Activated T-helper 1 cell treated with anti-CD3 and anti-CD28 coated beads, Interleukin-12 subunit alpha, Interleukin-12 subunit beta, Interleukin-2, Interleukin-4 antibody, amounts not matched to agents 30 ng/mL and 10 ng/mL and 1 ng/mL, durations not matched to agents 14 hours and 24 hours and 36 hours (primary cell): ENCODE measurements at regions of chr16 and their contacts with region 1.

Region 1: DNA sequence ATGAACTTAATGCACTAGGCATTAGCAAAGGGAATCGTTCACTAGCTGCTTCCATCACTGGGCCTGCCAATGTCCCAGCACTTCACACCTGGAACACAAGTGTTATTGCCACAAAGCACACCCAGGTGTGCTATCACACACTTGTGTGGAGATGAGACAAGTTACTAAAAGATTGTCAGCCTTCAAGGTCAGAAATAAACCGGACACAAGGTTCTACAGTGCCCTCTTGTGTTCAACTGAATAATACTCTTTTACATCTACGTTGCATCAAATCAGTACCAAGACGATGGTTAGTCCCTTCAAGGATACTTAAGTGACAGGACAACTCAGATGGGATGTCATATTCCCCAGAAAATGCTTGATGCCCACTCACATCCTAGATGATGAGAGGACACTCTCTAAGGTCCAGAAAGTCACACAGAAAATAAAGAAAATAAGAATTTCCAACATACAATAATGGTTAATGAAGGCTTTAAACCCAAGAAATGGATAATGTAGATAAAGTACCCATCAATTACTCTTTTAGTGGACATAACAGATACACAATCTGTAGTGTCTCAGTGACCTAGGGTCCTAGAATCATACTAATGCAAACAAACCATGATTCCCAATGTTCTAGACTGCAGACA is 16.4 kb upstream of the GLG1 start:
- DNase-seq: no peak
- H3K4me3 Mint-ChIP-seq: no peak overlapping the region
- H3K27ac Mint-ChIP-seq: no peak overlapping the region
- H3K4me1 Mint-ChIP-seq: peaks cover 39% of the 10 kb centered on the region
- H3K27me3 Mint-ChIP-seq: no peaks in the 10 kb centered on the region

Region 2: GRCh38 chr16:74372953-74373846 is 250.1 kb before region 1 on chr16:
- intact Hi-C with region 1: loop called (anchors 5 kb)
- DNase-seq: no peak
- H3K4me3 Mint-ChIP-seq: no peak overlapping the region
- H3K27ac Mint-ChIP-seq: no peak overlapping the region
- H3K4me1 Mint-ChIP-seq: peaks cover 6% of the 10 kb centered on the region
- H3K27me3 Mint-ChIP-seq: no peaks in the 10 kb centered on the region

Region 3: GRCh38 chr16:74466872-74467271 is 156.5 kb before region 1 on chr16:
- intact Hi-C with region 1: loop called (anchors 2 kb)
- DNase-seq: no peak
- H3K4me3 Mint-ChIP-seq: peak overlapping the region; percentile 21
- H3K27ac Mint-ChIP-seq: peak overlapping the region; percentile 29
- H3K4me1 Mint-ChIP-seq: peaks cover 25% of the 10 kb centered on the region
- H3K27me3 Mint-ChIP-seq: no peaks in the 10 kb centered on the region

Region 4: GRCh38 chr16:74492976-74493375 is 130.4 kb before region 1 on chr16:
- intact Hi-C with region 1: loop called (anchors 2 kb)
- DNase-seq: no peak
- H3K4me3 Mint-ChIP-seq: no peak overlapping the region
- H3K27ac Mint-ChIP-seq: no peak overlapping the region
- H3K4me1 Mint-ChIP-seq: peaks cover 5% of the 10 kb centered on the region
- H3K27me3 Mint-ChIP-seq: no peaks in the 10 kb centered on the region

Region 5: GRCh38 chr16:74577882-74578366 is 45.4 kb before region 1 on chr16:
- intact Hi-C with region 1: loop called (anchors 1 kb)
- DNase-seq: no peak
- H3K4me3 Mint-ChIP-seq: no peak overlapping the region
- H3K27ac Mint-ChIP-seq: no peak overlapping the region
- H3K4me1 Mint-ChIP-seq: peaks cover 43% of the 10 kb centered on the region
- H3K27me3 Mint-ChIP-seq: no peaks in the 10 kb centered on the region

Region 6: GRCh38 chr16:74650966-74651567 is 27.7 kb after region 1 on chr16:
- intact Hi-C with region 1: loop called (anchors 2 kb)
- DNase-seq: no peak
- H3K4me3 Mint-ChIP-seq: no peak overlapping the region
- H3K27ac Mint-ChIP-seq: no peak overlapping the region
- H3K4me1 Mint-ChIP-seq: peaks cover 23% of the 10 kb centered on the region
- H3K27me3 Mint-ChIP-seq: no peaks in the 10 kb centered on the region

Region 7: GRCh38 chr16:74666425-74667254 is 43.3 kb after region 1 on chr16 and contains the start of gene RFWD3:
- intact Hi-C with region 1: loop called (anchors 2 kb)
- DNase-seq: peak; percentile 96
- H3K4me3 Mint-ChIP-seq: peak within 1 kb of the TSS; percentile 91
- H3K27ac Mint-ChIP-seq: peak within 1 kb of the TSS; percentile 96
- H3K4me1 Mint-ChIP-seq: peaks cover 43% of the 10 kb centered on the region
- H3K27me3 Mint-ChIP-seq: no peaks in the 10 kb centered on the region
- total RNA-seq, gene RFWD3: 112 and 116 TPM in 2 replicates

Region 8: DNA sequence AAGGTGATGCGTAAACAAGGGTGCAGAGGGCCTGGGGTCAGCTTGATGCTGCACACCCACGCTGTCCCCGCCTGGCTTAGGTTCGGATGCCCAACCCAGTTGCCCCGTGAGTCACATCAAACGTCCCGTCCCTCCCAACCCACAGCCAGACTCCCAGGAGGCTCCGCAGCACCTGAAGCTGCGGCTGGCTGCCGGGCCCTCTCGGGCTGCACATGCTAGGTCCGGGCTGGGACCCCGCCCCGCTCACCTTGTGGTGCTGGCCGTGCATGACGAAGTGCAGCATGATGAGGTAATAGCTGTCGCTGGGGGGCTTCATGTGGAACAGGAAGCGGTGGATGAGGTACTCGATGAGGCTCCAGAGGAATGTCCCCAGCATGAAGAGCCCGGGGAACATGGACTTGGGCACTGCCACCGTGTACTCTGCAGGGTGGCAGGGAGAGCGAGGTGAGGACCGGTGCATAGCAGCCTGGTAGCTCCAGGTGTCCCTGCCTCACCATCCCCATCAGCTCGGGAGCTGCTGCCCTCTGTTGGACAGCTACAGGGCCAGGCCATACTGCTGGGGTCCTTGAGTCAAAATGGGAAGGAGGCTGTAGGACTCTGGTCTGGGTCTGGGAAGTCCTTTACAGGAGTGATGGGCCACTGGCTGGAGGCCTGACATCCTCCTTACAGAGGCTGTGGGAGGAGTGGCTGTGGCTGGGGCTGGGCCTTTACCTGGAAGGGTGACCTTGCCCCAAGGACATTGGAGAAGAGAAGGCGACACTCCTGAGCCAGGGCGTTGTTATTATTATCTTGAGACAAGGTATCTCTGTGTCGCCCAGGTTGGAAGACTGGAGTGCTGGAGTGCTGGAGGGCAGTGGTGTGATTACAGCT is 95.6 kb after region 1 on chr16:
- intact Hi-C with region 1: no loop called
- DNase-seq: no peak
- H3K4me3 Mint-ChIP-seq: no peak overlapping the region
- H3K27ac Mint-ChIP-seq: no peak overlapping the region
- H3K4me1 Mint-ChIP-seq: no peaks in the 10 kb centered on the region
- H3K27me3 Mint-ChIP-seq: no peaks in the 10 kb centered on the region

Region 9: DNA sequence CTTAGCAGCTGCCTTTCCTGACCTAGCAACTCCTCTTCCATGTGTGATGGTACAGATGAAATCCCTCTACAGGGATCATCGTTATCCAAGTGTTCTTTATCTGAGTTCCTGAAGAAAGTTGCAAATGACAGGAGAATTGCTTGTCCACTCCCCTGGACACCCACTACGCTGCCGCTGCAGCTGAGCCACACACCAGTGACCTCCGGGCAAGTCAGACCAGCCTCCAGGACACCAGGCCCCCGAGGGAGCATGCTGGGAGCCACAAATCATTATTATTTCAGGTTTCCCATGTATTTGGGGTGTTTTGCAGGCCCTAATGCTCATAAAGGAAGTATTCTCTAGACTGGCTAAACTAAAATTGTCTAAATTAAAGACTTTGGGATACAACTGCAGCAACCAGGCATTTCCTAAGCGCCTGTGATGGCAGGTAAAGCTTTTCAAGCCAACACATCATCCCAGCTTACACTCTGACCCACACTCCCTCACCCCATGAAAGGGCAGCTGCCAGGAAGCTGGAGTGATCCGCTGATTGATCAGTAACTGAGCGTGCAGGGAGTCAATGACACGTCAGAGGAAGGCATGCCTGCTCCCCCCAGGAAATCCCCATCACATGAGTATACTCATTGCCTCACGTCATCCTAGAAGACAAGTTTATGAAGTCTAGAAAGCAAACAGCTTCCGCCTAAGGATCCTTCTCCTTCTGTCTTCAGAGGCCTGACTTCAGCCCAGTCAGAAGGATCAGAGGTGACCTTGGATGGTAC is 136.9 kb after region 1 on chr16:
- intact Hi-C with region 1: no loop called
- DNase-seq: no peak
- H3K4me3 Mint-ChIP-seq: no peak overlapping the region
- H3K27ac Mint-ChIP-seq: no peak overlapping the region
- H3K4me1 Mint-ChIP-seq: no peaks in the 10 kb centered on the region
- H3K27me3 Mint-ChIP-seq: peaks cover 6% of the 10 kb centered on the region